ENCODE measurements at regions of chr14 and their contacts with region 1.

Region 1: DNA sequence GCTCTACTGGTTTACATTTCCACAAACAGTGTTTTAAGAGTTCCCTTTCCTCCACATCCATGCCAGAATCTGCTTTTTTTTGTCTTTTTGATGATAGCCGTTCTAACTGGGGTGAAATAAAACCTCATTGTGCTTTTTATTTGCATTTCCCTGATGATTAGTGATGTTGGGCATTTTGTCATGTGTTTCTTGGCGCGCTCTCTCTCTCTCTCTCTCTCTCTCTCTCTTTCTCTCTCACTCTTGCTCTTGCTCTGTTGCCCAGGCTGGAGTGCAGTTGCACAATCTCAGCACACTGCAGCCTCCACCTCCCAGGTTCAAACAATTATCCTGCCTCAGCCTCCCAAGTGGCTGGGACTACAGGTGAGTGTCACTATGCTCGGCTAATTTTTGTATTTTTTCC is 9.6 kb upstream of the MIS18BP1 start:
- DNase-seq: no peak

Region 2: DNA sequence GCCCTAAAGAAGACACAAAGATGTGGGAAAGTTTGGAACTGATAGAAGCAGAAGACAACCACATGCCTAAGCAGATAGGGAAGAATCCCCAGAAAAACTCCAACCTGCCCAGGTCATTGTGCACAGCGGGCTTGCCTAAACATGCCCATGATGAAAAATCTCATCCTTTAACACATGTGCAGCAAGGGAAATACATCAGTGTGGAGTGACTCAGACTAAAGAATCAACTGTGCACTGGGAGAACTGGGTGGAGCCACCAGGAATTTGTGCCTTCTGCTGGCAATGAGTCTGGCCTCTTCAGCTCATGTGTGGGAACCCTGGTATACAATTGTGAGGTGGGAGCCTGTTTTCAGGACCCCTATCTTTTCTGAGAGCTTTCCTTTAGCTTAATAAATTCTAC is 1154.0 kb before region 1 on chr14:
- intact Hi-C with region 1: loop called in 1 of 2 experiments (anchors 5 kb)
- DNase-seq: no peak

Region 3: DNA sequence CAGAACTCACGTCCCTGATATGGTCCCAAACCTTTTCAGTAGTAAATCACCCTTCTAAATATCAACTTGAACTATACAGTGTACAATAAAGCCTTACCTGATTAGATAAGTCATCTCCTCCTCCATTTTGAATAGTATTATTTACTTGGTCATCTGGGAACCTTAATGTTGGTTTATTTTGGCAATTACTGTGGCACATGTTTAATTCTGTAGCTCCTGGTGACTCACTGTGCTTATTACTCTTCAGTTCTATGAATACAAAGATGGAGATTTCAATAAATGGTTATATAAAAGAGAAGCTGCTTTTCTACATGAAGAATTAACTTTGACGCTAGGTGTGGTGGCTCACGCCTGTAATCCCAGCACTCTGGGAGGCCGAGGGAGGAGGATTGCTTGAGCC is 35.1 kb before region 1 on chr14:
- intact Hi-C with region 1: no loop called
- DNase-seq: no peak

Region 4: DNA sequence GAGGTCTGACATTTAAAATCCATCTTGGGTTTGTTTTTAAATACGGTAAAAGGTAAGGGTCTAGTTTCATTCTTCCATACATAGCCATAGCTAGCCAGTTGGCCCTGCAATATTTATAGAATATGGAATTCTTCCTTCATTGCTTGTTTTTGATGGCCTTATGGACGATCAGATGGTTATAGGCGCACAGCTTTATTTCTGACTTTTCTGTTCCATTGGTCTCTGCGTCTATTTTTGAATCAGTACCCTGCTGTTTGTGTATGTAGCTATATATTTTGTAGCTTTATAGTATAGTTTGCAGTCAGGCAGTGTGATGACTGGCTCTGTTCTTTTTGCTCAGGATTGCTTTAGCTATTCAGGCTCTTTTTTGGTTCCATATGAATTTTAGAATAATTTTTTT is 357.2 kb after region 1 on chr14:
- intact Hi-C with region 1: no loop called
- DNase-seq: no peak